ENCODE measurements at regions of chr12 and their contacts with region 1.

Region 1: GRCh38 chr12:34126239-34126641 is 103.9 kb downstream of the ALG10 start:
- H3K4me3 ChIP-seq: no peak overlapping the region
- H3K27ac ChIP-seq: no peak overlapping the region
- H3K4me1 ChIP-seq: no peaks in the 10 kb centered on the region
- CTCF ChIP-seq: no peak

Region 2: DNA sequence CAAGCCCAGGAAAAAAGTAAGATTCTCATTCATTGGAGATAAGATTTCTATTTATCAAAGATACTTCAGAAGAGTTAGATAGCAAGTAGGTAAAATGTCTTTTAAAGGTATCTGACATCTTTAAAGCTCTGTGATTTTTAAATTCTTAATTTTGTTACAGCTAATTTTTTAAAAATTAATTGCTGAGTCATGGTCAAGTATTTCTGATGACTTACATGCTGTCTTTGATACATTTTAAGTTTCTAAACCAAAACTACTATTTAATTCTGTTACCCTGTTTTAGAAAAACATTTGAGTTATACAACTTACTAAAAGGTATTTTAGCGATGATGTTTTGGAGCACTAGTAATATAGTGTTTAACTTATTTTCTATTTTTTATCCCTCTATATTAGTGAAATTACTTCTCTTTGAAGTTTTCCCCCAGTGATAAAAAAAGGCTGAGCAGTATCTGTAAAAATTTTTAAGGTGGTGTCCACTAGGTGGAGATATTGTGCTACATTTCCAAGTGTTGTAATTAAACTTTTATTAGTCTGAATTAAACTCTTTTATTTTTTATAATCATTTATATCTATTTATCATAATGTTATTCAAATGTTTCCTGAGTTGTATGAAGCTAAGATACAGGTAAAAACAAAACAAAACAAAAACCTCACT is 92.5 kb before region 1 on chr12:
- CTCF ChIA-PET with region 1: interaction called, 10 read pairs
- POLR2A ChIA-PET with region 1: no interaction called
- H3K4me3 ChIP-seq: no peak overlapping the region
- H3K27ac ChIP-seq: no peak overlapping the region
- H3K4me1 ChIP-seq: no peaks in the 10 kb centered on the region
- CTCF ChIP-seq: no peak

Region 3: GRCh38 chr12:34218165-34219045 is 92.2 kb after region 1 on chr12:
- CTCF ChIA-PET with region 1: interaction called, 13 read pairs
- POLR2A ChIA-PET with region 1: no interaction called
- H3K4me3 ChIP-seq: peak overlapping the region; percentile 41
- H3K27ac ChIP-seq: no peak overlapping the region
- H3K4me1 ChIP-seq: no peaks in the 10 kb centered on the region
- CTCF ChIP-seq: peak; percentile 86

Measured in HEK293 (cell line).